ENCODE measurements at regions of chr4 and their contacts with region 1.

Region 1: DNA sequence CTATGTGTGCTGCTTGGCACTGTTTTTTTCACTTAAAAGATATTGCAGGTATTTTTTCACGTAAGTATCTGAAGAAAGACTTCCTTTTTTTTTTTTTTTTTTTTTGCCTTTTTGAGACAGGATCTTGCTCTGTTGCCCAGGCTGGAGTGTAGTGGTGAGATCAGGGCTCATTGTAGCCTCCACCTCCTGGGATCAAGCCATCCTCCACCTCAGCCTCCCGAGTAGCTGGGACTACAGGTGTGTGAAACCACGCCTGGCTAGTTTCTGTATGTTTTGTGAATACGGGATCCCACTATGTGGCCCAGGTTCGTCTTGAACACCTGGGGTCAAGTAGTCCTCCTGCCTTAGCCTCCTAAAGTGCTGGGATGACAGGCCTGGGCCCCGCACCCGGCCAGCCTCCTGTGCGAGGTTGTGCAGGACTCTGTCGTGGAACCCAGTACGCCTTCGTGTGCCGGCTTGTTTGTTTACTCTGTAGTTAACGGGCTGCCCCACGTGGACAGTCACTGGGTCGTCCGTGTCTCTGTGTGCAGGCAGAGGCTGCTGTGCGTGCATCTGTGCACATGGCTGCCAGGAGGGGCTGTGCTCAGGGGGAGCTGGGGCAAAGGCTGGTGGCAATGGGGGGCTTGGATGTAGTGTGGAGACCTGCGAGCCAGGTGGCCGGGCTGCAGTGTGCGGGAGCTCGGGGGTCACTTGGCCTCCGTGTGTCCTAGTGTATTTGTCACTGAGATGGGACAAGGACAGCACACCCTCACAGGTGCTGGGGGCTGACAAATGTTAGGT is 179.5 kb downstream of the ADRA2C start:
- DNase-seq: no peak
- H3K4me3 ChIP-seq: no peak overlapping the region
- H3K4me3 Mint-ChIP-seq: no peak overlapping the region
- H3K27ac Mint-ChIP-seq: no peak overlapping the region
- H3K4me1 ChIP-seq: no peaks in the 10 kb centered on the region
- H3K4me1 Mint-ChIP-seq: peaks cover 6% of the 10 kb centered on the region
- H3K27me3 ChIP-seq: no peaks in the 10 kb centered on the region
- H3K27me3 Mint-ChIP-seq: no peaks in the 10 kb centered on the region
- CTCF ChIP-seq: no peak

Region 2: DNA sequence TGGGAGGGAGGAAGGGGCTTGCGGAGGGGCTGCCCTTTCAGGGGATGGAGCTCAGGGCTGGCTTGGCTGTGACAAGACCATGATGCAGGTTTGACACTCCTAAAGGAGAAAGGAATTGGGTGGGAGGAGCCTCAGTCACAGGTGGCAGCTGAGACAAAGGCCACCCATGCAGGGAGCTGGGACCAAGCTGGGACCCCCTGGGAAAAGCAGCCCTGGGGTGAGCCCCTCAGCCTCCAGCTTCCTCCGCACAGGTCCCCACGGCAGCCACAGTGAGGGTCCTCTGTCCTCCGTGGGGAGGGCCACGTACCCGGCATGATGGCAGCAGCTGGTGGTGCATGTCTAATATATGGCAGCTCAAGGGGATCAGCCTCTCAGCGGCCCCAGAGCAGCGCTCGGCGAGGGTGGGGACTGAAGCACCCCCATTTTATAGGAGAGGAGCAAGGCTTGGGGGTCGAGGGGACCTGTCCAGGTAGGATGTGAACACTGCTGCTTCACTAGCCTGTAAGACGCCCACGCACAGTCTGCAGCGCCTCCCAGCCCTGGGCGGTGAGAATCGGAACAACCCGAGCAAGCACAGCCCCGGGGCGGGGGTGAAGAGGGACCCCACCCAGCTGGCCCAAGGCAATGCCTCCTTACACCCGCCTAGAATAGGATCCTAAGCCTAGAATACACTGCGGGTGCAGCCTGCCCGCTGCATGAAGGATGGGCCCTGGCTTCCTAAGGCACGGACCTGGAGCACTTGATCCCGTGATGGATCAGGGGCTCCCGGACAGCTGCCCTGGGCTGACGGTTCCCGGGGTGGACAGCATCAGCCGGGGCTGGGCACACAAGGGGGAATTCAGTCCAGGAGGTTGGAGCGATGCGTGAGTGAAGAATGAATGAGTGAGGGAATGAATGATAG is 162.0 kb before region 1 on chr4:
- CTCF ChIA-PET with region 1: no interaction called
- POLR2A ChIA-PET with region 1: no interaction called
- intact Hi-C with region 1: loop called (anchors 10 kb)
- DNase-seq: peak; percentile 59 to 63
- H3K4me3 ChIP-seq: no peak overlapping the region
- H3K4me3 Mint-ChIP-seq: peak overlapping the region; percentile 24
- H3K27ac Mint-ChIP-seq: peak overlapping the region; percentile 63
- H3K4me1 ChIP-seq: peaks cover 32% of the 10 kb centered on the region
- H3K4me1 Mint-ChIP-seq: no peaks in the 10 kb centered on the region
- H3K27me3 ChIP-seq: no peaks in the 10 kb centered on the region
- H3K27me3 Mint-ChIP-seq: no peaks in the 10 kb centered on the region
- CTCF ChIP-seq: peak in 1 of 2 experiments; percentile 66

Region 3: GRCh38 chr4:3898098-3898497 is 47.6 kb before region 1 on chr4:
- CTCF ChIA-PET with region 1: no interaction called
- POLR2A ChIA-PET with region 1: no interaction called
- intact Hi-C with region 1: loop called (anchors 10 kb)
- DNase-seq: no peak
- H3K4me3 ChIP-seq: no peak overlapping the region
- H3K4me3 Mint-ChIP-seq: no peak overlapping the region
- H3K27ac Mint-ChIP-seq: no peak overlapping the region
- H3K4me1 ChIP-seq: peaks cover 5% of the 10 kb centered on the region; the same call in 1 of the 2 replicates
- H3K4me1 Mint-ChIP-seq: peaks cover 14% of the 10 kb centered on the region
- H3K27me3 ChIP-seq: no peaks in the 10 kb centered on the region
- H3K27me3 Mint-ChIP-seq: peaks cover 9% of the 10 kb centered on the region
- CTCF ChIP-seq: no peak

Region 4: GRCh38 chr4:4334798-4335520 is 389.3 kb after region 1 on chr4:
- CTCF ChIA-PET with region 1: no interaction called
- POLR2A ChIA-PET with region 1: no interaction called
- intact Hi-C with region 1: no loop called
- DNase-seq: peak; percentile 75 to 82
- H3K4me3 ChIP-seq: 0 out of 2 replicates have a peak overlapping the region, but pooled peaks have one; percentile 6
- H3K4me3 Mint-ChIP-seq: peak overlapping the region; percentile 59
- H3K27ac Mint-ChIP-seq: no peak overlapping the region
- H3K4me1 ChIP-seq: no peaks in the 10 kb centered on the region
- H3K4me1 Mint-ChIP-seq: no peaks in the 10 kb centered on the region
- H3K27me3 ChIP-seq: no peaks in the 10 kb centered on the region
- H3K27me3 Mint-ChIP-seq: peaks cover 4% of the 10 kb centered on the region
- CTCF ChIP-seq: peak; percentile 84 to 87